Heart left ventricle (tissue), 16 donors: ENCODE measurements at regions of chr12 and their contacts with region 1.

Region 1: DNA sequence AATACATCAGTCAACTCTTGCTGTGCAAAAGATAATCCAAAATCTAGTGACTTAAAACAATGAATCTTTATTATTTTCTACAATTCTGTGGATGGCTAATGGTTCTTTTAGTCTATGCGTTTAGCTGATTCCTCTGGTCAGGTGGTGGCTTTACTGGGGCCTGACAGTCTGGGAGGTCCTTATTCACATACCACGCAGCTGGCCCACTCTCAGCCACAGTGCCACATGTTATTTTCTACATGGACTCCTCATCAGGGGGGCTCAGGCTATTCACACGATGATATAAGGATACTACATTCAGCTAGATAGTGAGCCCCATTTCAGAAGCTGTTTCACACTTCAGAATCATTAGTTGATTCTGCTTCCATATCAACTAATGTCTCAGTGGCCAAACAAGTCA is 287.5 kb upstream of the MGAT4C start:
- DNase-seq: no peak
- ATAC-seq: no peak
- H3K4me3 ChIP-seq: no peak overlapping the region
- H3K27ac ChIP-seq: no peak overlapping the region
- H3K4me1 ChIP-seq: no peaks in the 10 kb centered on the region
- H3K27me3 ChIP-seq: no peaks in the 10 kb centered on the region
- CTCF ChIP-seq: no peak
- POLR2A ChIP-seq: no peak

Region 2: GRCh38 chr12:86565030-86565429 is 21.3 kb after region 1 on chr12:
- intact Hi-C with region 1: loop called in 1 of 10 experiments (anchors 2 kb)
- DNase-seq: no peak
- ATAC-seq: no peak
- H3K4me3 ChIP-seq: no peak overlapping the region
- H3K27ac ChIP-seq: no peak overlapping the region
- H3K4me1 ChIP-seq: no peaks in the 10 kb centered on the region
- H3K27me3 ChIP-seq: no peaks in the 10 kb centered on the region
- CTCF ChIP-seq: no peak
- POLR2A ChIP-seq: no peak

Region 3: DNA sequence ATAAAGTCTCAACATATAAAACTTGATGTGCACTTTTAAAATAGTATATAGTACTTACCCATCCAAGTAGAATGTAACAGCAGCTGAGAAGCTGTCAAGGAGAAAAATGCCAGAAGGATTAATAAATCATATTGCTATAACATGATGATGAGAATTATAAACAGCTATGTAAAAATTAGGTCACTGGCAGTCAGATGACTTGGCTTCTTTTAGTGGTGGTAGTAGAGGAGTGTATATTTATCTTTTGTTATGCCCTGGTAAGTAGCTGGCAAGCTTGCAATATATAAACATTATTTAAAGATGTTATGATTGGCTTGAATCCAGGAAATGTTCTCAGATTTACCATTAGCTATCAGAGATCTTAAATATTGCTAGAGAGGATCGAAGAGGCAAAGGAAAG is 183.4 kb after region 1 on chr12:
- intact Hi-C with region 1: no loop called
- DNase-seq: no peak
- ATAC-seq: no peak
- H3K4me3 ChIP-seq: no peak overlapping the region
- H3K27ac ChIP-seq: no peak overlapping the region
- H3K4me1 ChIP-seq: no peaks in the 10 kb centered on the region
- H3K27me3 ChIP-seq: no peaks in the 10 kb centered on the region
- CTCF ChIP-seq: no peak
- POLR2A ChIP-seq: no peak